MCF 10A (cell line): ENCODE measurements at regions of chr14 and their contacts with region 1.

Region 1: DNA sequence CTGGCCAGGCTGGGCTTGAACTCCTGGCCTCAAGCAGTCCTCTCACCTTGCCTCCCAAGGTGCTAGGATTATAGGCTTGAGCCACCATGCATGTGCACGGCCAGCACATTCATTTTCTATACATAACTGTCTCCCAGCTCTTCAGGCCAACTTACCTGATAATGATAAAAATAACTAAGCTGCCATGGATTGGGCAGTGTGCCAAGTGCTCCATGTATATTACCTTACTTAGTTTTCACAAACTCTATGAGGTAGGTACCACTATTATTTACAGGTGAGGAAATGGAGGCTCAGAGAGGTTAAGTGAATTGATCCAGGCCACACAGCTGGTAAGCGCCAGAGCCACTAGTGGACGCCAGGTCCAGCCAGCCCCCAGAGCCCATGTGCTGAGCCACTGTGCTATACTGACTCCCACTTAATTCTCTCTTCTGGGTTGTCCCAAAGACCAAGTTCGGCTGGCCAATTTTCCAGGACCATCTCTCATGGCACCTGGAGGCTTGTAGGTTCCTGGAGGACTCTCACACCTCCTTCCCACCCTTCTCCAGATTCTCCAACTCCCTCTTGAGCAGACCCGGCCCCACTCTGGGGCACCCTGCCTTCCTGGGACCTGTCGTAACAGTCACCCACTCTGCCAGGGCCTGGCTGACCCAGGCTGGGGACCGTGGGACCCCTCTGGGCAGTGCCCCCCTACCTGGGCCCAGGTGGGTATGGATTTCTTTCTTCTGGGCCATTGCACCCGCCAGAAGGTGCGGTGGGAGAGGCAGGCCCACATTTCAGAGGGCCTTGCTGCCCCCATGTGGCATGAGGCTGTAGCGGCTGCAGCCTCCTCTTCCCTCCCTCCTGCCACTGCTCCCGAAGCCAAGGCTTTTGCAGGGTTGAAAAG is 30.2 kb upstream of the CIPC start:
- DNase-seq: peak; percentile 74
- H3K4me3 Mint-ChIP-seq: no peak overlapping the region
- H3K27ac Mint-ChIP-seq: no peak overlapping the region
- H3K4me1 Mint-ChIP-seq: peaks cover 23% of the 10 kb centered on the region
- H3K27me3 Mint-ChIP-seq: no peaks in the 10 kb centered on the region
- CTCF ChIP-seq: peak; percentile 87

Region 2: GRCh38 chr14:76904740-76905438 is 163.0 kb before region 1 on chr14:
- CTCF ChIA-PET with region 1: interaction called, 496 read pairs
- POLR2A ChIA-PET with region 1: interaction called, 6 read pairs
- intact Hi-C with region 1: no loop called
- DNase-seq: peak; percentile 99
- H3K4me3 Mint-ChIP-seq: peak overlapping the region; percentile 55
- H3K27ac Mint-ChIP-seq: peak overlapping the region; percentile 57
- H3K4me1 Mint-ChIP-seq: peaks cover 29% of the 10 kb centered on the region
- H3K27me3 Mint-ChIP-seq: no peaks in the 10 kb centered on the region
- CTCF ChIP-seq: no peak

Region 3: DNA sequence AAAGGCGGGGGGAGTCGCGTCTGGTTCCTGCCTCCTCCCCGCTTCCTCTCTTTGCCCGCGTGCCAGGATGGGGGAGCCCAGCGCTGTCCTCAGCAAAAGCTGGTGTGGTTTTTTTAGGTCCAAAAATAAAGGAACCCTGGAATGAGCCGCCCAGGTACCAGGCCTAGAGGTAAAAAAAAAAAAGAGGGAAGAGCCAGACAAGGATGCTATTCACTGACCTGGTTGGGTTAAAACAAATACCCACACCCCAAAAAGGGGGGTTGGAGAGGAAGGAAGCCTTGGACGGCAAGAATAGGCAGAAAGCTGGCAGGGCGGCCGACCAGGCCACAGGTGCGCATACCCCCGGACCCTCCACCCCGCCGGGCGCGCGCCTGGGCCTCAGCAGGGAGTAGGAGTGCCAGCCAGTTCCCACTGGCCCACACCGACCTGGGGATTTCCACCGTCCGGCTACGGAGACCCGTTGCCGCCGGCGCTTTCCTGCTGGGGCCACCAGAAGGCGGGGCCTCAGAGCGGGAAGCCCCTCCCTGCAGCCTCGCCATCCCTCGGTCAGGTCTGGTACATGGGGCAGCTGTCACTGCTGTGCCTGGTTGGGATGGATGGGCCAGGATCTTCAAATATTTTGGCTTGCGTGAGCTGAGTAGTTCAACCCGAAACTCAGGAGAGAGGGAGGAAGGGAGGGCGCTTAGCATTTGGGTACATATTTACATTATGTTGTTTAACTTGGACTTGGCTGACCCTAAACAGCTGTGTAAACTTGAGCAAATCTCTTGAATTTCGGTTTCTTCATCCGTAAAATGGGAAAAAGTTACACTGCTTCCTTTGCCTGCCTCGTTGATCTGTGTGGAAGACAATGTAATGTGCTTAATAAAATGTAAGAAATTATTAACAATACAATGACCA is 34.0 kb before region 1 on chr14:
- CTCF ChIA-PET with region 1: interaction called, 88 read pairs
- POLR2A ChIA-PET with region 1: interaction called, 7 read pairs
- intact Hi-C with region 1: no loop called
- DNase-seq: peak; percentile 90
- H3K4me3 Mint-ChIP-seq: peak overlapping the region; percentile 75
- H3K27ac Mint-ChIP-seq: peak overlapping the region; percentile 93
- H3K4me1 Mint-ChIP-seq: peaks cover 37% of the 10 kb centered on the region
- H3K27me3 Mint-ChIP-seq: no peaks in the 10 kb centered on the region
- CTCF ChIP-seq: no peak

Region 4: GRCh38 chr14:77086017-77086736 is 18.3 kb after region 1 on chr14:
- CTCF ChIA-PET with region 1: interaction called, 188 read pairs
- POLR2A ChIA-PET with region 1: interaction called, 5 read pairs
- intact Hi-C with region 1: no loop called
- DNase-seq: no peak
- H3K4me3 Mint-ChIP-seq: no peak overlapping the region
- H3K27ac Mint-ChIP-seq: no peak overlapping the region
- H3K4me1 Mint-ChIP-seq: peaks cover 6% of the 10 kb centered on the region
- H3K27me3 Mint-ChIP-seq: no peaks in the 10 kb centered on the region
- CTCF ChIP-seq: no peak

Region 5: GRCh38 chr14:77219591-77219990 is 151.7 kb after region 1 on chr14:
- CTCF ChIA-PET with region 1: no interaction called
- POLR2A ChIA-PET with region 1: no interaction called
- intact Hi-C with region 1: no loop called
- DNase-seq: no peak
- H3K4me3 Mint-ChIP-seq: no peak overlapping the region
- H3K27ac Mint-ChIP-seq: no peak overlapping the region
- H3K4me1 Mint-ChIP-seq: no peaks in the 10 kb centered on the region
- H3K27me3 Mint-ChIP-seq: no peaks in the 10 kb centered on the region
- CTCF ChIP-seq: no peak